Naive thymus-derived CD4-positive, alpha-beta T cell (primary cell): ENCODE measurements at regions of chr5 and their contacts with region 1.

Region 1: DNA sequence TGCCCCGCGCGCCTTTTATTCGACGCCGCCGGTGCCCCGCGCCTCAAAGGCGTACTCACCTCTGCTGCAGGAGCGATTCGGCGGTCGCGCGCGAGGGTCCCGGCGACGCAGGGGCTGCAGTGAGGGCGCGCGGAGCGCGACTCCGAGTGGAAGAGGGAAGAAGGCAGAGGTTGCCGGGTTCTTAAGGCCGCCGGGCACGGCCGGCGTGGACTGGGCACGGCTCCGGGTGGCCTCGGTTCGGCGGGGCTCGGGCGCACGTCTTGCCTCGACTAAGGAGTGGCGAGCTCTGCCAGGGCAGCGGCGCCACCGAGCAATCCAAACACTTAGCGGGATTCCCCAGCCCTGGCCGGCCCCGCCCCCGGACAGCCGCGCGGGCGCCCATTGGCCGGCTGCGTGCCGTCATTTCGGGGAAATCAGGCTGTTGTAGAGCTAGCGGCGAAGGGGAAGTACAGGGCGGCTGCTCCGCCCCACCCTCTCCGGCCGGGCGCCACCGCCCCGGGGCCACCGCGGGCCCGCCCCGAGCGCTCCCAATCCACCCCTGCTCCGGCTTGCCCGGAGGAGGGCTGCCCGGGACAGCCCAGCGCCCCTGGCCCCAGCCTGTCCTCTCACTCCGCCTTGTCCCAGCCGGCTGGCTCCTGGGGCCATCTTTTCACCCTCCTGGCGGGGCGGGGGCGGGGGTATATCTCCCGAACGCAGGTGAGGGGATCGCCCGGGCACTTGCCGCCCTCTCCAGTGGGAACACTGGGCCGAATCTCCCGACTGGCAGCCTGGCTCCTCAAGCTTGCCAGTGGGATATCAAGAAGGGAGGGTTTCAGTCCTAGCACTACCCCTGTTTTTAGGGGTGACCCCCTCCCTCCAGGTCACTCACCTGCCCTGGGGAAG is at the start of gene IRF1:
- DNase-seq: peak; percentile 97 to 100 (median 99)
- ATAC-seq: peak; percentile 89
- H3K4me3 ChIP-seq: peak within 1 kb of the TSS; percentile 78
- H3K4me3 Mint-ChIP-seq: peak within 1 kb of the TSS; percentile 92 to 98 (median 95)
- H3K27ac ChIP-seq: peak within 1 kb of the TSS; percentile 99
- H3K27ac Mint-ChIP-seq: peak within 1 kb of the TSS; percentile 93 to 99 (median 96)
- H3K4me1 ChIP-seq: peaks cover 59 to 65% of the 10 kb centered on the region in 2 donors
- H3K4me1 Mint-ChIP-seq: peaks cover 52 to 78% (median 71%) of the 10 kb centered on the region in 7 donors
- H3K27me3 ChIP-seq: no peaks in the 10 kb centered on the region
- H3K27me3 Mint-ChIP-seq: peaks cover 0 to 2% (median 0%) of the 10 kb centered on the region in 5 donors
- total RNA-seq, gene IRF1: 118 to 632 (median 549) TPM

Region 2: GRCh38 chr5:132293066-132293991 is 197.4 kb before region 1 on chr5:
- CTCF ChIA-PET with region 1: no interaction called
- POLR2A ChIA-PET with region 1: no interaction called
- intact Hi-C with region 1: loop called (anchors 5 to 10 kb)
- DNase-seq: peak; percentile 8 to 79 (median 35)
- ATAC-seq: peak; percentile 54
- H3K4me3 ChIP-seq: peak overlapping the region; percentile 69
- H3K4me3 Mint-ChIP-seq: peak overlapping the region; percentile 80 to 95 (median 90)
- H3K27ac ChIP-seq: peak overlapping the region; percentile 43
- H3K27ac Mint-ChIP-seq: peak overlapping the region in 3 of 9 donors; percentile 36 to 75 (median 43)
- H3K4me1 ChIP-seq: peaks cover 0 to 8% of the 10 kb centered on the region in 2 donors
- H3K4me1 Mint-ChIP-seq: peaks cover 5 to 26% (median 9%) of the 10 kb centered on the region in 7 donors
- H3K27me3 ChIP-seq: no peaks in the 10 kb centered on the region
- H3K27me3 Mint-ChIP-seq: peaks cover 9 to 32% (median 19%) of the 10 kb centered on the region in 5 donors

Region 3: DNA sequence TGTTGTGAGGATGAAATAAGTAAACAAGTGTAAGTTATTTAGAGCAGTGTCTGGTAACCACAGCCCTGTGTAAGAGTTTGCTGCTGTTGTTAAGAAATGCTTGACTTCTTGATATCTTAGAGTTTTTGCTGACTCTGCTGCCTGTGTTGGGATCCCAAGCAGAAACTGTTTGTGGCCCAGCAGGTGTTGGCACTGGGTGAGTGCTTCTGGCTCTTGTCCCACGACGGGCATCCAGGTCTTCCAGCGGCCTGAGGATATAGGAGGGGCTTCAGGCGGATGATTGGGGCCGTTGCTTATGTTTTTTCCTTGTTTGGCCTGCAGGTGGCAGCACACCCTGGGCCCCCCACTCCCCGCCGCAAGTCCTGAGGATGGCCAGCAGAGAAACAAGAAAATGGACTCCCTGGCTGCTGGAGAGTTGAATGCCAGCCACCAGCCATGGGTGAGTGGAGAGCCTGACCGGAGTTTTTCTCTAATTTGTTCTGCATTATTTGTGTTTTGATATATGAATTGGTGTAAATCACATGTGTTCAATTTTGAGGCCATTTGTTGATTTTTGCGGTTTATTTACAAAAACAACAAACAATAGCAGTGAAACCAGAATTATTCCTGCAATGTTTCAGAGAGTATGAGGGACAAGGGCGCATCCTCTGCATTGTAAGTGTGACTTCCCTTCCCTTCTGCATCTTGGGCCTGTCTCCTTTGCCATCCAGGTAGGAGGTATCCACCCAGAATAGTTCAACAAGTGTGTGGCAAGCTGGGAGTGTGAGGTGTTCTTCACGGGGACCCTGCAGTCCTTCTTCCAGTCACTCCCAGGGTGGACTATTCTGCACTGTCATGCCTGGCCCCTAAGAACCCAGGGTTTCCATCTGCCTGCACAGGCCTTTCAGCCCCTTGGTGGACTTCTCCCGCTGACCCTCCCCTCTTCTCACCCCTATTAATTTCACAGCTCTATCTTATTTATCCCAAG is 70.9 kb before region 1 on chr5:
- CTCF ChIA-PET with region 1: interaction called, 32 read pairs
- POLR2A ChIA-PET with region 1: interaction called, 132 read pairs
- intact Hi-C with region 1: loop called in 1 of 2 experiments (anchors 1 kb)
- DNase-seq: peak; percentile 42 to 72 (median 55)
- ATAC-seq: peak; percentile 84
- H3K4me3 ChIP-seq: peak overlapping the region; percentile 12
- H3K4me3 Mint-ChIP-seq: peak overlapping the region; percentile 54 to 88 (median 76)
- H3K27ac ChIP-seq: peak overlapping the region; percentile 77
- H3K27ac Mint-ChIP-seq: peak overlapping the region; percentile 79 to 99 (median 97)
- H3K4me1 ChIP-seq: peaks cover 71 to 92% of the 10 kb centered on the region in 2 donors
- H3K4me1 Mint-ChIP-seq: peaks cover 77 to 98% (median 95%) of the 10 kb centered on the region in 7 donors
- H3K27me3 ChIP-seq: no peaks in the 10 kb centered on the region
- H3K27me3 Mint-ChIP-seq: no peaks in the 10 kb centered on the region

Region 4: GRCh38 chr5:132466433-132467286 is 24.1 kb before region 1 on chr5:
- CTCF ChIA-PET with region 1: interaction called, 23 read pairs
- POLR2A ChIA-PET with region 1: interaction called, 268 read pairs
- intact Hi-C with region 1: no loop called
- DNase-seq: peak in 8 of 9 donors; percentile 58 to 76 (median 72)
- ATAC-seq: peak; percentile 81
- H3K4me3 ChIP-seq: peak overlapping the region; percentile 57
- H3K4me3 Mint-ChIP-seq: peak overlapping the region; percentile 72 to 87 (median 78)
- H3K27ac ChIP-seq: peak overlapping the region; percentile 69
- H3K27ac Mint-ChIP-seq: peak overlapping the region; percentile 83 to 95 (median 94)
- H3K4me1 ChIP-seq: peaks cover 71 to 93% of the 10 kb centered on the region in 2 donors
- H3K4me1 Mint-ChIP-seq: peaks cover 58 to 98% (median 97%) of the 10 kb centered on the region in 7 donors
- H3K27me3 ChIP-seq: no peaks in the 10 kb centered on the region
- H3K27me3 Mint-ChIP-seq: no peaks in the 10 kb centered on the region

Region 5: DNA sequence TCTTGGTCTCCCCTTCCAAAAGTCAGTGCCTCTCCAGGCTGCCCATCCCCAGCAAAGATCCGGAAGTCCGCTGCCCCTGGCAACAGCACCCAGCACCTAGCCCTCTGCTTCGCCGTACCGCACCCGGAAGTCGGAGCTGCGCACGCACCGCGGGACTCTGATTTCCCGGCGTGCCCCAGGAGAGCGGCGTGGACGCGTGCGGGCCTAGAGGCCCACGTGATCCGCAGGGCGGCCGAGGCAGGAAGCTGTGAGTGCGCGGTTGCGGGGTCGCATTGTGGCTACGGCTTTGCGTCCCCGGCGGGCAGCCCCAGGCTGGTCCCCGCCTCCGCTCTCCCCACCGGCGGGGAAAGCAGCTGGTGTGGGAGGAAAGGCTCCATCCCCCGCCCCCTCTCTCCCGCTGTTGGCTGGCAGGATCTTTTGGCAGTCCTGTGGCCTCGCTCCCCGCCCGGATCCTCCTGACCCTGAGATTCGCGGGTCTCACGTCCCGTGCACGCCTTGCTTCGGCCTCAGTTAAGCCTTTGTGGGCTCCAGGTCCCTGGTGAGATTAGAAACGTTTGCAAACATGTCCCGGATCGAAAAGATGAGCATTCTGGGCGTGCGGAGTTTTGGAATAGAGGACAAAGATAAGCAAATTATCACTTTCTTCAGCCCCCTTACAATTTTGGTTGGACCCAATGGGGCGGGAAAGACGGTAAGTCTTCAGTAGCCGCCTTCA is 66.2 kb after region 1 on chr5 and contains the start of gene RAD50:
- CTCF ChIA-PET with region 1: no interaction called
- POLR2A ChIA-PET with region 1: interaction called, 3 read pairs
- intact Hi-C with region 1: loop called in 1 of 2 experiments (anchors 1 kb)
- DNase-seq: peak; percentile 81 to 92 (median 90)
- ATAC-seq: peak; percentile 97
- H3K4me3 ChIP-seq: peak within 1 kb of the TSS; percentile 78
- H3K4me3 Mint-ChIP-seq: peak within 1 kb of the TSS; percentile 90 to 99 (median 96)
- H3K27ac ChIP-seq: peak within 1 kb of the TSS; percentile 76
- H3K27ac Mint-ChIP-seq: peak within 1 kb of the TSS; percentile 90 to 98 (median 97)
- H3K4me1 ChIP-seq: peaks cover 5 to 14% of the 10 kb centered on the region in 2 donors
- H3K4me1 Mint-ChIP-seq: peaks cover 10 to 37% (median 29%) of the 10 kb centered on the region in 7 donors
- H3K27me3 ChIP-seq: no peaks in the 10 kb centered on the region
- H3K27me3 Mint-ChIP-seq: no peaks in the 10 kb centered on the region
- total RNA-seq, gene RAD50: 18.0 to 35.4 (median 32.2) TPM

Region 6: DNA sequence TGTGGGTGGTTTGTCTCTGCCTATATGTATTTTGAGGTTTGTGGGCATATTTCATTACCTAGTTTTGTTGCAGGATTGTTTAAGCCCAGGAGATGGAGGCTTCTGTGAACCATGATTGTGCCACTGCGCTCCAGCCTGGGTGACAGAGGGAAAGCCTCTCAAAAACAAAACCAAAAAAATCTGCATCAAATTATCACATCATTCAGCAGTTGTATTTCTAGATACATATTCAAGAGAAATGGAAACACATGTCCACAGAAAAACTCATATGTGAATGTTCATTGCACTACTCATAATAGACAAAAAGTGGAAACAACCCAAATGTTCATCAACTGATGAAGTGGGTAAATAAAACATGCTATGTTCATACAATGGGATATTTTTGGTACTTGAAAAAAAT is 591.0 kb after region 1 on chr5:
- CTCF ChIA-PET with region 1: no interaction called
- POLR2A ChIA-PET with region 1: no interaction called
- intact Hi-C with region 1: no loop called
- DNase-seq: no peak
- ATAC-seq: no peak
- H3K4me3 ChIP-seq: no peak overlapping the region
- H3K4me3 Mint-ChIP-seq: no peak overlapping the region
- H3K27ac ChIP-seq: no peak overlapping the region
- H3K27ac Mint-ChIP-seq: peak overlapping the region in 5 of 9 donors; percentile 25 to 56 (median 43)
- H3K4me1 ChIP-seq: no peaks in the 10 kb centered on the region
- H3K4me1 Mint-ChIP-seq: peaks cover 11 to 32% (median 26%) of the 10 kb centered on the region in 7 donors
- H3K27me3 ChIP-seq: no peaks in the 10 kb centered on the region
- H3K27me3 Mint-ChIP-seq: no peaks in the 10 kb centered on the region

Region 7: DNA sequence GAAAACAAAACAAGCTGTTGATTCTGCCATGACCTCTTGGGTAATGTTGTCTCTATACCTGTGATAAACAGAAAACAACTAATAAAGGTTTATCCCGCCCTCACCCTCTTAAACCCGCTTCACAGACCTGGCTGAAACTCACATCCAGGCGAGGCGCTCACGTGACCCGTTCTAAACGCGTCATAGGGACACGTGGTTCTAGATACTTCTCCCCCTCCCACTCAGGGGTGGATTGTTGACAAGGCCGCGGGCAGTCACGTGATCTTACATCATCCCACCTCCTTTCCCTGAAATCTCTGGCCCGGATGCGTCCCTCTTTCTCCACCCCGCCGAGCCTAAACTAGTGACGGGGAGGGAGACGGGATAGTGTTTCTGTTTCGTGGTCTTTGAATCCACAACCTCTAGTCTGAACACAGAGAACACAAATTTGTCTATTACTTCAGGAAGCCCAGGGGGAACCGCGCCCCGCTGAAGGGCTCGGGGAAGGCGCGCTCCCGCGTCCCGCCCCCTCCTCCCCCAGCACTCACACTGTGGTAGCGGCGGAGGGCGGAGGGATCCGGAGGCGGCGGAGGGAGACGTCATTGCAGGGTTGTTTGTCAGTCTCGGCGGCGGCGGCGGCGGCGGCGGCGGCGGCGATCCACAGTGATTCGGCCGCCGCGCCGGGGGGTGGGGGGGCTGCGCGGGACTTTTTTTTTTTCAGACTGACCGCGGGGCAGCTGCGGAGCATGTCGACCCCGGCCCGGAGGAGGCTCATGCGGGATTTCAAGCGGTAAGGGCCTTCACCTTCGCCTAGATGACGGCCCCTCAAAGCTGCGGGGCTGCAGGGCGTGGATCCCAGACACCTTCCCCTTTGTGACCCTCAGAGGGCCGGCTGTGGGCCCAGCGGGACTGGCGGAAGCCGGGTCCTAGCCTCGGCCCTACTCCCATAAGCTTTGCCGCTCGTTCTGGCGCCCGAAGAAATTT is 1880.4 kb after region 1 on chr5 and contains the start of gene UBE2B:
- CTCF ChIA-PET with region 1: no interaction called
- POLR2A ChIA-PET with region 1: no interaction called
- intact Hi-C with region 1: loop called in 1 of 2 experiments (anchors 10 kb)
- DNase-seq: peak; percentile 96 to 99 (median 98)
- ATAC-seq: peak; percentile 86
- H3K4me3 ChIP-seq: peak within 1 kb of the TSS; percentile 94
- H3K4me3 Mint-ChIP-seq: peak within 1 kb of the TSS; percentile 82 to 99 (median 96)
- H3K27ac ChIP-seq: peak within 1 kb of the TSS; percentile 100
- H3K27ac Mint-ChIP-seq: peak within 1 kb of the TSS; percentile 97 to 100 (median 100)
- H3K4me1 ChIP-seq: peaks cover 25 to 38% of the 10 kb centered on the region in 2 donors
- H3K4me1 Mint-ChIP-seq: peaks cover 30 to 76% (median 60%) of the 10 kb centered on the region in 7 donors
- H3K27me3 ChIP-seq: no peaks in the 10 kb centered on the region
- H3K27me3 Mint-ChIP-seq: peaks cover 0 to 8% (median 0%) of the 10 kb centered on the region in 5 donors
- total RNA-seq, gene UBE2B: 91.4 to 141 (median 124) TPM